H1 (cell line): ENCODE measurements at regions of chr5 and their contacts with region 1.

Region 1: DNA sequence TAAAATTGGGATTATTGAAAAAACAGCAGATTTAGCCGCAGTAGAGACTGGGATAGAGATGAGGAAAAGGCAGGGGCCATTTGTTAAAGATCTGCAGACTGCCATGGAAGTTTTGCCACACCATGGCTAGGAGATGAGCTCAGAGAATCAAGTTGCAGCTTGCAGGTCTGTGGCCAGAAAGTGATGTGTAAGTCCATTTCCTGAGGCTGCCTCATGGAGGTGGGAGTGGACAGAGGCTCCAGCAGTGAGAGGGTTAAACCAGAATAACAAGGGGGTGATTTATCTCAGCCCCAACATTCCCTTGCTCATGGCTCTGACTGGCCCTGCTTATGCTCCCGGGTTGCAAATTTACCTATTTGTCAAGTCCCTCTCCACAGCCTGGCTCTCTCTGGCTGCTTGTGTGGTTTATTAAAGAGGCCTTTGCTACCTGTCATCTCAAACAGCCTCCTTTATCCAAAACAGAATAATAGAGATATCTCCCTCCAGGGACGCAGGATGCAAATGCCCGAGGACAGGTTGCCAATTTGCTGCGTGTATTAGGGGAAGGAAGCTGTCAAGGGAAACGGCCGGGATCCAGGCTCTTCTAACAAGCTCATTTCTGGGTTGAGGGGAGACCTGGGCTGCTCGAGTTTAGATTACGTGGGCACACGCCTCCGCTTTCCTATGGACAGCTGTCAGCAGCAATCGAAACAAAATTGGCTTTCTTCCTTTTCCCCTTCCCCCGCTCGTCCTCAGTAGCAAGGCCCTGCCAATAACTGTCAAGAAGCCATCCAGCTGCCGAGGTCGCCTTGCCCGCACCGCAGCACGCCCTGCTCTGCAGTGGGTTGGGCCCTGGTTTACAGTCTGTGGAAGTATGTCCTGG is 72.8 kb upstream of the PITX1 start:
- DNase-seq: no peak
- H3K4me3 ChIP-seq: no peak overlapping the region
- H3K27ac ChIP-seq: no peak overlapping the region
- H3K4me1 ChIP-seq: no peaks in the 10 kb centered on the region
- H3K27me3 ChIP-seq: 0 out of 7 replicates have a peak, but pooled peaks cover 0 to 3% (median 0%) of the 10 kb centered on the region in 4 experiments
- CTCF ChIP-seq: no peak
- EP300 ChIP-seq: no peak
- POLR2A ChIP-seq: no peak
- RAD21 ChIP-seq: no peak

Region 2: GRCh38 chr5:135119481-135119880 is 12.6 kb after region 1 on chr5:
- CTCF ChIA-PET with region 1: interaction called, 38 read pairs
- POLR2A ChIA-PET with region 1: interaction called, 6 read pairs
- DNase-seq: no peak
- H3K4me3 ChIP-seq: no peak overlapping the region
- H3K27ac ChIP-seq: no peak overlapping the region
- H3K4me1 ChIP-seq: no peaks in the 10 kb centered on the region
- H3K27me3 ChIP-seq: no peaks in the 10 kb centered on the region; a peak in 1 of 7 replicates
- CTCF ChIP-seq: no peak
- EP300 ChIP-seq: no peak
- POLR2A ChIP-seq: no peak
- RAD21 ChIP-seq: no peak